Tibial artery (tissue), 4 donors: ENCODE measurements at regions of chr3 and their contacts with region 1.

Region 1: GRCh38 chr3:193465992-193466608 is 87.5 kb upstream of the ATP13A5 start:
- DNase-seq: no peak
- H3K4me3 ChIP-seq: no peak overlapping the region
- H3K27ac ChIP-seq: no peak overlapping the region
- H3K4me1 ChIP-seq: no peaks in the 10 kb centered on the region
- H3K27me3 ChIP-seq: no peaks in the 10 kb centered on the region
- CTCF ChIP-seq: no peak

Region 2: GRCh38 chr3:193496658-193497057 is 30.6 kb after region 1 on chr3:
- intact Hi-C with region 1: loop called (anchors 1 kb)
- DNase-seq: no peak
- H3K4me3 ChIP-seq: no peak overlapping the region
- H3K27ac ChIP-seq: no peak overlapping the region
- H3K4me1 ChIP-seq: no peaks in the 10 kb centered on the region
- H3K27me3 ChIP-seq: no peaks in the 10 kb centered on the region
- CTCF ChIP-seq: no peak